ENCODE measurements at regions of chr16 and their contacts with region 1.

Region 1: DNA sequence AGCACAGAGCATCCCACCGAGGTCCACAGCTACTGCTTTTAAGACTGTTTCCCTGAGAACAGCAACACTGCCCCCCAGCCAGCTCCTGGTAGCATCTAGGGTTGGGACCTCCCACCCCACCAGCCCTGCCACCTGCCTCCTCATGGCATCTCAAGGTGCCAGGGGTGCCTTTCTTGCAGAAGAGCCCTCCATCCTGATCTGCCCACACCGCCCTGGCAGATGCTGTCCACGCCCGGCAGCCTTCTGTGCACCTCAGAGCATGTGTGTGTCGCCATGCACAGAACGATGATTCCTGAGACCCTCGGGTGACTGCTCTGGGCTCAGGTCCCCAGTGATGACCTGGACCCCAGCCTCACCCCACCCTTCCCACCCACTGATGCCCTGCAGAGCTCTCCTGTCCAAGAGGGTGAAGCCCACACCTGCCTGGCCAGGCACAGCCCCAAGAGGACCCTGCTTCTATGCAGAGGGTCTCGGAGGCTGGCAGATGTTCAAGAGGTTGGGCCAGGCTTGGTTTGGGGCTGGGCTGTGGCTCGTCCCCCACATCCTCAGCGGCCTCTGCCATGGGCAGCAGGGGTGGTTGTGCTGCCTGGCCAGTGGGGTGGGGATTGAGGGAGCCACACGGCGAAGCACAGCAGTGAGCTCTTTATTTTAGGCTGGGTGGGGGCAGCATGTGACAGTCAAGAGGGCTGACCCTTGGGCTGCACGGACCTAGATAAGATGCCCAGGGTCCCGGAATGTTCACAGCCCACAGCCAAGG is 5.2 kb upstream of the SPATA2L start:
- DNase-seq: no peak
- ATAC-seq: no peak
- H3K4me3 Mint-ChIP-seq: no peak overlapping the region
- H3K27ac Mint-ChIP-seq: no peak overlapping the region
- H3K4me1 Mint-ChIP-seq: peaks cover 11% of the 10 kb centered on the region
- H3K27me3 Mint-ChIP-seq: no peaks in the 10 kb centered on the region

Region 2: DNA sequence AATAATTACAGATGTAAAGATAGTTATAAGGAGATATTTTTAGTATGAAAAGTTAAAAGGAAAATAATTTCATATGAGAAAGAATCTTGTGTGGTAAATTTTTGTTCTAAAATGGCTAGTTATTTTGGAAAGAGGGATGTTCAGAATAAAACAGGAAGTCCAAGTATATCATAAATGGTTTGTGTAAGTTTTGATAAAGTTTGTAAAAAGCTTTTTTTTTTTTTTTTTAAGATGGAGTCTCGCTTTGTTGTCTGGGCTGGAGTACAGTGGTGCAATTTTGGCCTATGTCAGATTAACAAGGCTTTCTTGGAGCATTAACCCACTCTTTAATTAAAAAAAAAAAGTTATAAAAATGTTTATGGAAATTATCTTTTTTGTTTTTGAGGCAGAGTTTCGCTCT is 28.4 kb before region 1 on chr16:
- CTCF ChIA-PET with region 1: no interaction called
- DNase-seq: no peak
- ATAC-seq: no peak
- H3K4me3 Mint-ChIP-seq: no peak overlapping the region
- H3K27ac Mint-ChIP-seq: no peak overlapping the region
- H3K4me1 Mint-ChIP-seq: no peaks in the 10 kb centered on the region
- H3K27me3 Mint-ChIP-seq: no peaks in the 10 kb centered on the region

Region 3: DNA sequence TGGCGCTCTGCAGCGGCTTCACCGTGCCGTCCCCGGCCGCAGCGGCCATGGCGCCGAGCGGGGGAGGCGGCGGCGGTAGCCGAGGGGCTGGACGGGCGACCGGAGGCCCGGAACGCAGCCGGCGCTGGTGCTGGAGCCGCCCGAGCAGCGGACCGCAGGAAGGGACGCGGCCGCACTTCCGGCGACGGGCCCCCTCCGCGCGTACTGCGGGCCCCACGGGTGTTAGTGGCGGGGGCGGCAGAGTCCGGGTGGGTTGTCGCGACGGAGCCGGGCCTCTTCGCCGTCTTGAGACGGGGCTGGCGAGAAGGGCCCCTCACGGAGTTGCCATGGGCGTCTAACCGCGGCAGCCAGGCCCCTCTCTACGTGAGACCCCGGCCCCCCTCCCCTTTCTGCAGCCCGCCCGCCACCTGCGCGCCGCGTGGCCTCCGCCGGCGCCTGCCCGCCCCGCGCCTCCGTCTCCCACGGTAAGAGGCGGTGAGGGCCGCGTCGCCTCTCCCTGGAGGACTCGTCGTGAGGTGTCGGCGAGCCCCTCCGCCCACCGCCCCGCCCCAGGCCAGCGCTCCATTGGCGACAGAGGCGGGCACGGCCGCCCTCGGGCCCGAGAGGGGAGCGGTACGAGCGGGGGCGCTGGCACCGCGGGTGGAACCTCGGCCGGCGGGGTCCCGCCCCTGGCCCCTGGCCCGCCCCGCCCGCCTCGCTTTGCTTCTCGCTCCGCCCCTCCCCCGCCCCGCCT is 14.3 kb after region 1 on chr16 and contains the starts of genes VPS9D1 and ZNF276:
- CTCF ChIA-PET with region 1: interaction called, 39 read pairs
- DNase-seq: peak; percentile 87
- ATAC-seq: peak; percentile 48
- H3K4me3 Mint-ChIP-seq: peak within 1 kb of the TSS; percentile 86
- H3K27ac Mint-ChIP-seq: peak within 1 kb of the TSS; percentile 99
- H3K4me1 Mint-ChIP-seq: peaks cover 46% of the 10 kb centered on the region
- H3K27me3 Mint-ChIP-seq: no peaks in the 10 kb centered on the region
- total RNA-seq, gene VPS9D1: 3.6 to 4.6 TPM
- total RNA-seq, gene ZNF276: 38.0 to 58.1 TPM

Region 4: DNA sequence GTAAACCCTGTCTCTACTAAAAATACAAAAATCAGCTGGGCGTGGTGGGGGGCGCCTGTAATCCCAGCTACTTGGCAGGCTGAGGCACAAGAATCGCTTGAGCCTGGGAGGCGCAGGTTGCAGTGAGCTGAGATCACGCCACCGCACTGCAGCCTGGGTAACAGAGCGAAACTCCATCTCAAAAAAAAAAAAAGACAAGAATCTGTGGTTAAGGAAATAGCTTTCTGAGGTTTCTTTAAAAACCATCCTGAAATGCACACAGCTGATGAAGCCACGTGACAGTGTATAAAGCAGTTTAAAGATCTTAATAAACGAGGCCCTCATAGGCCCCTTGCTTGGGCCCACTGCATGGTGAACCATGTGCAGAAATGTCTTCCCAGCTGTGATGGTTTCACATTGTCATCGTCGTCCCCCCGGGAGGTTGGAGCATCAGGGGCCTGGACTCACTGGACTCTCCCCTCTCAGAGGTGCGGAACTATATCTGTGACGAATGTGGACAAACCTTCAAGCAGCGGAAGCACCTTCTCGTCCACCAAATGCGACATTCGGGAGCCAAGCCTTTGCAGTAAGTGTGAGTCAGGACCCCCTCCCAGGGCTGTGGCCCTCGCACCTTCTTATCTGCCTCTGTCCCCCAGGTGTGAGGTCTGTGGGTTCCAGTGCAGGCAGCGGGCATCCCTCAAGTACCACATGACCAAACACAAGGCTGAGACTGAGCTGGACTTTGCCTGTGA is 30.8 kb after region 1 on chr16:
- CTCF ChIA-PET with region 1: interaction called, 16 read pairs
- DNase-seq: peak; percentile 77
- ATAC-seq: peak; percentile 70
- H3K4me3 Mint-ChIP-seq: no peak overlapping the region
- H3K27ac Mint-ChIP-seq: peak overlapping the region; percentile 79
- H3K4me1 Mint-ChIP-seq: peaks cover 24% of the 10 kb centered on the region
- H3K27me3 Mint-ChIP-seq: no peaks in the 10 kb centered on the region

Region 5: DNA sequence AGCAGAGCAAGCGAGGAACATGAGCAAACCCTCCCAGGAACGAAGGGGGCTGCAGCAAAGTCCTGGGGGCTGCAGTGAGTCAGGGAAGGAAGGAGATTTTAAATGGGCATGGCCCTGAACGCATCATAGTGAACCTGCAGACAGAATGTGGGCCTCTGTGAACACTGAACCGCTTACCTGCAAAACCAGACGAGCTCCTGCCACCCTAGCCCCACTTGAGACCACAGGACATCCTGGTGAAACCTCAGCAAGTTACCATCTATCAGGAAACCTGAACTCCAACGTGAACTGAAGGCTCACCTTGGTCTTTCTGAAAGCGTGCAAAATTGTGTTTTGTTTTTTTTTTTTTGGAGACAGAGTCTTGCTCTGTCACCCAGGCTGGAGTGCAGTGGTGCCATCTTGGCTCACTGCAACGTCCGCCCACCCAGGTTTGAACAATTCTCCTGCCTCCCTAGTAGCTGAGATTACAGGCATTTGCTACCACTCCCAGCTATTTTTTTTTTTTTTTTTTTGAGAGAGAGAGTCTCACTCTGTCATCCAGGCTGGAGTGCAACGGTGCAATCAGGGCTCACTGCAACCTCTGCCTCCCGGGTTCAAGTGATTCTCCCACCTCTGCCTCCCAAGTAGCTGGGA is 79.0 kb after region 1 on chr16:
- CTCF ChIA-PET with region 1: interaction called, 100 read pairs
- DNase-seq: peak; percentile 73
- ATAC-seq: peak; percentile 71
- H3K4me3 Mint-ChIP-seq: no peak overlapping the region
- H3K27ac Mint-ChIP-seq: peak overlapping the region; percentile 73
- H3K4me1 Mint-ChIP-seq: peaks cover 34% of the 10 kb centered on the region
- H3K27me3 Mint-ChIP-seq: no peaks in the 10 kb centered on the region

Region 6: GRCh38 chr16:89909777-89910716 is 203.4 kb after region 1 on chr16:
- CTCF ChIA-PET with region 1: interaction called, 15 read pairs
- DNase-seq: peak; percentile 78
- ATAC-seq: peak; percentile 87
- H3K4me3 Mint-ChIP-seq: no peak overlapping the region
- H3K27ac Mint-ChIP-seq: no peak overlapping the region
- H3K4me1 Mint-ChIP-seq: peaks cover 10% of the 10 kb centered on the region
- H3K27me3 Mint-ChIP-seq: no peaks in the 10 kb centered on the region

Measured in activated CD8-positive, alpha-beta memory T cell treated with anti-CD3 and anti-CD28 coated beads, Interleukin-2, amount 10 ng/mL, durations not matched to agents 7 days and 5 days (primary cell).